ENCODE measurements at regions of chr15 and their contacts with region 1.

Region 1: DNA sequence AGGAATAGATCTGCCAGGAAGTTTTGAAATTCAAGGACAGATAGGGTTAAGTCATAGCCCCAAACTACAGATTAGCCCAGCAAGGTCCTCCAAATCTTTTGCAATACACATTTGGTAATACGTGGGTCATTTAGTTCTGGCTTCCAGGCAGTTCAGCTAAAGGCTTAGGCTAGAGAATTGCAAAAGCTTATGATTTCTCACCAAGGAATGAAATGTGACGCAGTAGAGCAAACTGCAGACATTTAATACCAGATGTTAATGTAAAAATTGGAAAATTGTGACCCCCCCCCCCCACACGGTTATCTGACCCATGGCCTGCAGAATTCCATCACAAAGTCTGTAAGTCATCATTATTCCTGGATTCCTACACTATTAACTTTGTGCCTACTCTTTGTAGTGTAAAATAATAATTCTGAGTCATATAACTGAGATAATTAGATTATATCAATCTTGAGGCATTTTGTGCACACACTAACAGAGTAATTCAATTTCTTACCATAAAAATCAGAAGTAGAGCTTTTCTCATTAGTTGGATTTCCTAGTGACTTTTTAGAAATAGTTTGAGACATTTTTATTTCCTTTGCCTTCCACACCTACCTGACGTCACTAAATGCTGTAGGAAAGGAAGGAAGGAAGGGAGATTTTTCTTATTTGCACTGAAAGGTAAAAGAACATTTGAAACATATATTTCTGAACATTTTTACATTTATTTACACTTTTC is 235.2 kb downstream of the DTWD1 start:
- DNase-seq: no peak
- H3K4me3 ChIP-seq: no peak overlapping the region
- H3K4me3 Mint-ChIP-seq: no peak overlapping the region
- H3K27ac Mint-ChIP-seq: no peak overlapping the region
- H3K4me1 ChIP-seq: no peaks in the 10 kb centered on the region
- H3K4me1 Mint-ChIP-seq: no peaks in the 10 kb centered on the region
- H3K27me3 ChIP-seq: no peaks in the 10 kb centered on the region
- H3K27me3 Mint-ChIP-seq: peaks cover 2% of the 10 kb centered on the region
- CTCF ChIP-seq: no peak

Region 2: DNA sequence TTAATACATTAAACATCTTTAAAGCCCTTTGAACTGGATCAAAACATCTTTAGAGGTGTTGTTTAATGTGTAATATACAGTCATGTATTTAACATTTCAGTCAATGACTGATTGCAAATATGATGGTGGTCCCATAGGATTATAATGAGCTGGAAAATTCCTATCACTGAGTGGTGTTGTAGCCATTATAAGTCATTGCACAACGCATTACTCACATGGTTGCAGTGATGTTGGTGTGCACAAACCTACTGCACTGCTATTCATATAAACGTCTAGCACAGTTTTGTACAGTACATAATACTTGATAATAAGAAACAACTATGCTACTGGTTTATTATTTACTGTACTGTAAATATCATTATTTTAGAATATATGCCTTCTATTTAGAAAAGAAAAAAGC is 159.6 kb before region 1 on chr15:
- CTCF ChIA-PET with region 1: no interaction called
- POLR2A ChIA-PET with region 1: no interaction called
- intact Hi-C with region 1: no loop called
- DNase-seq: no peak
- H3K4me3 ChIP-seq: no peak overlapping the region
- H3K4me3 Mint-ChIP-seq: no peak overlapping the region
- H3K27ac Mint-ChIP-seq: no peak overlapping the region
- H3K4me1 ChIP-seq: no peaks in the 10 kb centered on the region
- H3K4me1 Mint-ChIP-seq: no peaks in the 10 kb centered on the region
- H3K27me3 ChIP-seq: no peaks in the 10 kb centered on the region
- H3K27me3 Mint-ChIP-seq: no peaks in the 10 kb centered on the region
- CTCF ChIP-seq: no peak

Region 3: DNA sequence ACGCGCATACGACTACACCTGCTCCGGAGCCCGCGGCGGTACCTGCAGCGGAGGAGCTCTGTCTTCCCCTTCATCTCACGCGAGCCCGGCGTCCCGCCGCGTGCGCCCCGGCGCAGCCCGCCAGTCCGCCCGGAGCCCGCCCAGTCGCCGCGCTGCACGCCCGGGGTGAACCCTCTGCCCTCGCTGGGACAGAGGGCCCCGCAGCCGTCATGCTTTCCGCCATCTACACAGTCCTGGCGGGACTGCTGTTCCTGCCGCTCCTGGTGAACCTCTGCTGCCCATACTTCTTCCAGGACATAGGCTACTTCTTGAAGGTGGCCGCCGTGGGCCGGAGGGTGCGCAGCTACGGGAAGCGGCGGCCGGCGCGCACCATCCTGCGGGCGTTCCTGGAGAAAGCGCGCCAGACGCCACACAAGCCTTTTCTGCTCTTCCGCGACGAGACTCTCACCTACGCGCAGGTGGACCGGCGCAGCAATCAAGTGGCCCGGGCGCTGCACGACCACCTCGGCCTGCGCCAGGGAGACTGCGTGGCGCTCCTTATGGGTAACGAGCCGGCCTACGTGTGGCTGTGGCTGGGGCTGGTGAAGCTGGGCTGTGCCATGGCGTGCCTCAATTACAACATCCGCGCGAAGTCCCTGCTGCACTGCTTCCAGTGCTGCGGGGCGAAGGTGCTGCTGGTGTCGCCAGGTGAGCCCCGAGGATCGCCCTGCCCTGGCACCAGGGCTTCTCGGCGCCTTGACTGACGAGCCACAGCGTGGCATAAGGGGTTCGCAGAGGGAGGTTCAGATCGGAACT is 326.3 kb after region 1 on chr15:
- CTCF ChIA-PET with region 1: interaction called, 13 read pairs
- POLR2A ChIA-PET with region 1: no interaction called
- intact Hi-C with region 1: no loop called
- DNase-seq: peak; percentile 73 to 84
- H3K4me3 ChIP-seq: peak overlapping the region; percentile 83
- H3K4me3 Mint-ChIP-seq: peak overlapping the region; percentile 88
- H3K27ac Mint-ChIP-seq: peak overlapping the region; percentile 51
- H3K4me1 ChIP-seq: peaks cover 5% of the 10 kb centered on the region; the same call in 1 of the 2 replicates
- H3K4me1 Mint-ChIP-seq: peaks cover 11% of the 10 kb centered on the region
- H3K27me3 ChIP-seq: no peaks in the 10 kb centered on the region
- H3K27me3 Mint-ChIP-seq: no peaks in the 10 kb centered on the region
- CTCF ChIP-seq: no peak